Activated naive CD4-positive, alpha-beta T cell treated with anti-CD3 and anti-CD28 coated beads for 36 hours (primary cell): ENCODE measurements at regions of chr7 and their contacts with region 1.

Region 1: DNA sequence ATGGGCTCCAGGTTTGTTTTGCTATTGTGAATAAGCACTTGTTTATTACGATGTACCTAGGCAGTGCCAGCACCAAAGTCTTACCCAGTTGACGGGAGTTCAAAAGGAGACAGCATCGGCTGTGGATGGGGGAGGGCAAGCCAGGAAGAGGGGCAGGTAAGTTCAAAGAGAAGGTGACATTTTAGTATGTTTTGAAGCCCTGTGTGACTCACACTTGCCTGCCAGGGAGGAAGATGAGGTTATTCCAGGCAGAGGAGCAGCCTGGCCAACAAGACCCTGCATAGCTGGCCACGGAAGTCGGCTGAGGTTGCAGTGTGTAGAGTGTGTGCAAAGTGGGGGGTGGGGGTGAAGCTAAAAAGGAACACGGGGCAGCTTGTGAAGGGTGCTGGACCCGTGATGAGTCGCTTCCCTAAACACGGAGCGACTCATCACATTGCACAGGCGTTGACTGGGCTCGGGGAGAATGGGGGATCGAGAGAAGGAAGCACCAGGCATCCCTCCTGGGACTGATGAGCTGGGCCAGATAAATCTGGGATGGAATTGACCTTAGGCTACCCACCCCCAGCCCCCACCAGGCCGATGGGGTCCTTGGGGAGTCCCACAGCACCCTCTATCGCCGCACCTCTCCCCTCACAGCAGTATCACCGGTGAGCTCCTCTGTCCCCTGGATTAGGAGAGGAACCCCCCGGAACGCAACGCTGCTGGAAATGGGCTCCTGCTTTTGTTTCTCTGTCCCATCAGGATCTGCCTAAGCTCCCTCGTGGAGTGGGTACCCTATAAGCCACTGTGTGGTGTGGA is 97.9 kb upstream of the IKZF1 start:
- DNase-seq: peak; percentile 92
- H3K4me3 Mint-ChIP-seq: peak overlapping the region; percentile 51
- H3K27ac Mint-ChIP-seq: peak overlapping the region; percentile 92
- H3K4me1 Mint-ChIP-seq: peaks cover 86% of the 10 kb centered on the region
- H3K27me3 Mint-ChIP-seq: no peaks in the 10 kb centered on the region

Region 2: DNA sequence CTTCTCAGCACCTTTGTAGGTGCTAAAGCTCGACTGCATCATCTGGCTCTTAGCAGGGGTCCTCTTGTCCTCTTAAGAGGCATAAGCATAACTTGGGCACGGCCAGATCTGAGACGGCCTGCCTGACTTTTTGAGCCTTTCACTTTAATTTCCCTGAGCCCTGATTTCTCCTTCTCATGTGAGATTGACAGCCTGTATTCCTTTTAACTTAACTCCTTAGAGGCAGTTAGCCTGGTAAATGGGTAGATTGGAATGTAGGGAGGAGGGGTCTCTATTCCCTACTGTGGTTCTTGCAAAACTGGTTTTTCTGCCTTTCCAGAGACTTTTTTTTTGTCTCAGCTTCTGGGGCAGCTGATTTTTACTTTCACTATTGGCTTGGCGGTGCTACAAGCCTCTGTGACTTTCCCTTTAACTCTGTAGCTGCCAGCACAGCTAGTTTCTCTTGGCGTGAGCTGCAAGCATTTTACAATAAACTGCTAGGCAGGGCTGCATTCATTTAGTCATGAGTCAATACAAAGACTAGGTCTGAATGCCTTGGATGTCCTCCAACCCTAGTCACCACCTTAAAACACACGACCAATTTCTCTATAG is 137.6 kb before region 1 on chr7:
- CTCF ChIA-PET with region 1: no interaction called
- intact Hi-C with region 1: no loop called
- DNase-seq: peak; percentile 52
- H3K4me3 Mint-ChIP-seq: peak overlapping the region; percentile 81
- H3K27ac Mint-ChIP-seq: peak overlapping the region; percentile 70
- H3K4me1 Mint-ChIP-seq: peaks cover 21% of the 10 kb centered on the region
- H3K27me3 Mint-ChIP-seq: no peaks in the 10 kb centered on the region

Region 3: DNA sequence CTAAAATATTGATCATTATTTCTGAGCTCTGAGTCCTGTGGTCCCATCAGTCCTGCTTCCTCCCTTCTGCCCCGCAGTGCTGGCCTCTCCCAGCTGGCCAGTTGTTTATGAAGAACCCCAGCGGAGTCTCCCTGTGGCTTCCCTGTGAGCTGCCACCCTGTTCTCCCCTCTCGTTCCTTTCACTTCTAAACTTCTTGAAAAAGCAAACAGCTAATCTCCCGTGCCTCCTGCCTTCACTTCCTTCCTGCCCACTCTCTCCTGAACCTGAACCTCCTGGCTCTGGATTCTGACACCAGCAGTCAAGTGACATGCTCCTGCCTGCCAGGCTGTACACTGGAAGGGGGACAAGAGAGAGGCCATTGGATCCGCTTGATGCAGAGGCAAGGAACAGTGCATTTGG is 49.9 kb before region 1 on chr7:
- CTCF ChIA-PET with region 1: interaction called, 24 read pairs
- intact Hi-C with region 1: loop called (anchors 1 kb)
- DNase-seq: no peak
- H3K4me3 Mint-ChIP-seq: peak overlapping the region; percentile 50
- H3K27ac Mint-ChIP-seq: peak overlapping the region; percentile 92
- H3K4me1 Mint-ChIP-seq: peaks cover 45% of the 10 kb centered on the region
- H3K27me3 Mint-ChIP-seq: no peaks in the 10 kb centered on the region

Region 4: DNA sequence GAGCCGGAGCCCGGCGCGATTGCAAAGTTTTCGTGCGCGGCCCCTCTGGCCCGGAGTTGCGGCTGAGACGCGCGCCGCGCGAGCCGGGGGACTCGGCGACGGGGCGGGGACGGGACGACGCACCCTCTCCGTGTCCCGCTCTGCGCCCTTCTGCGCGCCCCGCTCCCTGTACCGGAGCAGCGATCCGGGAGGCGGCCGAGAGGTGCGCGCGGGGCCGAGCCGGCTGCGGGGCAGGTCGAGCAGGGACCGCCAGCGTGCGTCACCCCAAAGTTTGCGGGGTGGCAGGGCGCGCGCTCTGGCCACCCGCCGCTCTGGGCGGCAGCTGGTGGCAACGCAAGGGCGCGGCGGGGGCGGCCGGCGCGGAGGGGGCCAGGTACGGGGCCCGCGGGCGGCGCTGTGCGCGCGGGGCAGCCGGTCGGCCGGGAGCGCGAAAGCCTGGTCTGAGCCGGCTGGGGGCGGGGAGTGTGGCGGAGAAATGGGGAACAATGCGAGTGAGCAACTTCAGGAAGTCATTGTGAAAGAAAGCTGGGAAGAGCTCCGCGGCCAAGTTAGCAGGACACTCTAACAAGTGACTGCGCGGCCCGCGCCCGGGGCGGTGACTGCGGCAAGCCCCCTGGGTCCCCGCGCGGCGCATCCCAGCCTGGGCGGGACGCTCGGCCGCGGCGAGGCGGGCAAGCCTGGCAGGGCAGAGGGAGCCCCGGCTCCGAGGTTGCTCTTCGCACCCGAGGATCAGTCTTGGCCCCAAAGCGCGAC is 97.7 kb after region 1 on chr7 and contains the start of gene IKZF1:
- CTCF ChIA-PET with region 1: interaction called, 84 read pairs
- intact Hi-C with region 1: loop called (anchors 1 kb)
- DNase-seq: peak; percentile 74
- H3K4me3 Mint-ChIP-seq: peak within 1 kb of the TSS; percentile 95
- H3K27ac Mint-ChIP-seq: peak within 1 kb of the TSS; percentile 99
- H3K4me1 Mint-ChIP-seq: peaks cover 34% of the 10 kb centered on the region
- H3K27me3 Mint-ChIP-seq: no peaks in the 10 kb centered on the region
- total RNA-seq, gene IKZF1: 213 to 226 TPM

Region 5: GRCh38 chr7:50359995-50360925 is 153.6 kb after region 1 on chr7:
- CTCF ChIA-PET with region 1: interaction called, 26 read pairs
- intact Hi-C with region 1: no loop called
- DNase-seq: peak; percentile 91
- H3K4me3 Mint-ChIP-seq: peak overlapping the region; percentile 56
- H3K27ac Mint-ChIP-seq: peak overlapping the region; percentile 100
- H3K4me1 Mint-ChIP-seq: peaks cover 97% of the 10 kb centered on the region
- H3K27me3 Mint-ChIP-seq: no peaks in the 10 kb centered on the region

Region 6: GRCh38 chr7:50449881-50450589 is 243.4 kb after region 1 on chr7 and contains the start of gene FIGNL1:
- CTCF ChIA-PET with region 1: interaction called, 4 read pairs
- intact Hi-C with region 1: loop called (anchors 1 kb)
- DNase-seq: peak; percentile 86
- H3K4me3 Mint-ChIP-seq: peak within 1 kb of the TSS; percentile 94
- H3K27ac Mint-ChIP-seq: peak within 1 kb of the TSS; percentile 91
- H3K4me1 Mint-ChIP-seq: peaks cover 45% of the 10 kb centered on the region
- H3K27me3 Mint-ChIP-seq: no peaks in the 10 kb centered on the region
- total RNA-seq, gene FIGNL1: 43.7 to 44.4 TPM